Common myeloid progenitor, CD34-positive (primary cell): ENCODE measurements at regions of chr4 and their contacts with region 1.

Region 1: DNA sequence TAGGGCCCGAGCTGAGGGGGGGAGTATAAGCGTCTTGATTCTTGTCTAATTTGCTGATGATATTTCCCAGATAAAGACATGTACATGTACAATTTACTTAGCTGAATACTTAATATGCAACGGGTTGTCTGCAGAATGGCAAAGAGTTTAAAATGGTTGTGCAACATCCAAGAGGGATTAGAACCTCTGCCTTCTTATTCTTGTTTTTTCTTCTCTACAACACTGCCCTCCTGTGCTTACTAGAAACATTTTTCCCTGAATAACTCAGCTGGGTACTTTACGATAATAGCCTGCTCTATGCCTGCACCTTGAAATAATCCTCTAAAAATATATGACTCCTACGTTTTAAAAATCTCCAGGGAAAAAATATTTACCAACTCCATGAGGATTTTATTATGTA is 41.8 kb downstream of the INTS12 start:
- DNase-seq: peak; percentile 33 to 66 (median 52)
- H3K4me3 ChIP-seq: no peak overlapping the region
- H3K27ac ChIP-seq: no peak overlapping the region
- H3K4me1 ChIP-seq: no peaks in the 10 kb centered on the region
- H3K27me3 ChIP-seq: no peaks in the 10 kb centered on the region

Region 2: DNA sequence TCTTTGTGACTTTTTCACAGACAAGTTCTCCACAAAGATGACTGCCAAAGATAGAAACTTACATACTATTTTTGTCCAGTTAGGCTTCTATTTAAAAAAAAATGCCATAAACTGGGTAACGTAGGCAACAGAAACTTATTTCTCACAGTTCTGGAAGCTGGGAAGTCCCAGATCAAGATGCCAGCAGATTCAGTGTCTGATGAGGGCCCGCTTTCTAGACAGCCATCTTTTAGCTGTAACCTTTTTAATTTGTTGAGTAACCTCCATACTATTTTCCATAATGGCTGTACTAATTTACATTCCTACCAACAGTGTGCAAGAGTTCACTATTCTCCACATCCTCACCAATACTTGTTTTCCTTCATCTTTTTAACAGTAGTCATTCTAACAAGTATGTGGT is 58.8 kb before region 1 on chr4:
- CTCF ChIA-PET with region 1: no interaction called
- POLR2A ChIA-PET with region 1: no interaction called
- DNase-seq: no peak
- H3K4me3 ChIP-seq: no peak overlapping the region
- H3K27ac ChIP-seq: no peak overlapping the region
- H3K4me1 ChIP-seq: peaks cover 0 to 7% (median 2%) of the 10 kb centered on the region in 4 experiments
- H3K27me3 ChIP-seq: no peaks in the 10 kb centered on the region

Region 3: GRCh38 chr4:105631818-105632400 is 34.8 kb before region 1 on chr4:
- CTCF ChIA-PET with region 1: interaction called, 11 read pairs
- POLR2A ChIA-PET with region 1: no interaction called
- DNase-seq: peak in 2 of 3 donors; percentile 12 to 29
- H3K4me3 ChIP-seq: no peak overlapping the region
- H3K27ac ChIP-seq: no peak overlapping the region
- H3K4me1 ChIP-seq: no peaks in the 10 kb centered on the region
- H3K27me3 ChIP-seq: no peaks in the 10 kb centered on the region

Region 4: GRCh38 chr4:105644257-105644656 is 22.4 kb before region 1 on chr4:
- CTCF ChIA-PET with region 1: no interaction called
- POLR2A ChIA-PET with region 1: no interaction called
- DNase-seq: no peak
- H3K4me3 ChIP-seq: no peak overlapping the region
- H3K27ac ChIP-seq: no peak overlapping the region
- H3K4me1 ChIP-seq: no peaks in the 10 kb centered on the region
- H3K27me3 ChIP-seq: no peaks in the 10 kb centered on the region